Activated T-helper 1 cell treated with anti-CD3 and anti-CD28 coated beads, Interleukin-12 subunit alpha, Interleukin-12 subunit beta, Interleukin-2, Interleukin-4 antibody, amounts not matched to agents 30 ng/mL and 10 ng/mL and 1 ng/mL, durations not matched to agents 14 hours and 24 hours and 36 hours (primary cell): ENCODE measurements at regions of chr6 and their contacts with region 1.

Region 1: GRCh38 chr6:117482240-117483003 is at the start of gene DCBLD1:
- DNase-seq: peak; percentile 55
- H3K4me3 Mint-ChIP-seq: peak within 1 kb of the TSS; percentile 95
- H3K27ac Mint-ChIP-seq: peak within 1 kb of the TSS; percentile 91
- H3K4me1 Mint-ChIP-seq: peaks cover 25% of the 10 kb centered on the region
- H3K27me3 Mint-ChIP-seq: peaks cover 44% of the 10 kb centered on the region
- total RNA-seq, gene DCBLD1: 3.9 and 4.5 TPM in 2 replicates

Region 2: GRCh38 chr6:117373211-117373813 is 109.1 kb before region 1 on chr6:
- intact Hi-C with region 1: no loop called
- DNase-seq: no peak
- H3K4me3 Mint-ChIP-seq: no peak overlapping the region
- H3K27ac Mint-ChIP-seq: no peak overlapping the region
- H3K4me1 Mint-ChIP-seq: no peaks in the 10 kb centered on the region
- H3K27me3 Mint-ChIP-seq: peaks cover 2% of the 10 kb centered on the region

Region 3: GRCh38 chr6:117449549-117450439 is 32.6 kb before region 1 on chr6:
- intact Hi-C with region 1: loop called (anchors 1 kb)
- DNase-seq: peak; percentile 31
- H3K4me3 Mint-ChIP-seq: no peak overlapping the region
- H3K27ac Mint-ChIP-seq: no peak overlapping the region
- H3K4me1 Mint-ChIP-seq: no peaks in the 10 kb centered on the region
- H3K27me3 Mint-ChIP-seq: peaks cover 40% of the 10 kb centered on the region

Region 4: GRCh38 chr6:117463762-117464665 is 18.4 kb before region 1 on chr6:
- intact Hi-C with region 1: loop called (anchors 2 kb)
- DNase-seq: no peak
- H3K4me3 Mint-ChIP-seq: no peak overlapping the region
- H3K27ac Mint-ChIP-seq: no peak overlapping the region
- H3K4me1 Mint-ChIP-seq: peaks cover 21% of the 10 kb centered on the region
- H3K27me3 Mint-ChIP-seq: peaks cover 30% of the 10 kb centered on the region

Region 5: DNA sequence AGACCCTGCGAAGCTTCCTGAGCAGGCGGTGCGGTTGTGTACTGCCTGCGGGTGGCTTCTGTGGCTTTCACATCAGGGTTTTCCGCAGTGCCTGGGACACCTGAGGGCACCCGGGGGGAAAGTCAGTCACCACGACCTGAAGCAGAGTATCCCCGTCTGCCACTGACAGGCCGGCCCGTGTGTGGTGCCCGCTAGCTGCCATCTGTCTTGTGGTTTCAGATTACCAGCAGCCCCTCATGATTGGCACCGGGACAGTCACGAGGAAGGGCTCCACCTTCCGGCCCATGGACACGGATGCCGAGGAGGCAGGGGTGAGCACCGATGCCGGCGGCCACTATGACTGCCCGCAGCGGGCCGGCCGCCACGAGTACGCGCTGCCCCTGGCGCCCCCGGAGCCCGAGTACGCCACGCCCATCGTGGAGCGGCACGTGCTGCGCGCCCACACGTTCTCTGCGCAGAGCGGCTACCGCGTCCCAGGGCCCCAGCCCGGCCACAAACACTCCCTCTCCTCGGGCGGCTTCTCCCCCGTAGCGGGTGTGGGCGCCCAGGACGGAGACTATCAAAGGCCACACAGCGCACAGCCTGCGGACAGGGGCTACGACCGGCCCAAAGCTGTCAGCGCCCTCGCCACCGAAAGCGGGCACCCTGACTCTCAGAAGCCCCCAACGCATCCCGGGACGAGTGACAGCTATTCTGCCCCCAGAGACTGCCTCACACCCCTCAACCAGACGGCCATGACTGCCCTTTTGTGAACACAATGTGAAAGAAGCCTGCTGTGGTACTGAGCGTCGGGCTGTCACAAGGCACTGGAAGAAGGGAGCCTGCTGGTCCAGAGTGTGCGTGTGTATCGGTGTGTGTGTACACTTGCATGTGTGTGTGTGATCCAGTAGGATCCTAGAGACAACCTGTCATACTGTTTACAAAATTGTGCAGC is 65.5 kb after region 1 on chr6:
- intact Hi-C with region 1: loop called (anchors 1 kb)
- DNase-seq: peak; percentile 26
- H3K4me3 Mint-ChIP-seq: peak overlapping the region; percentile 77
- H3K27ac Mint-ChIP-seq: peak overlapping the region; percentile 12
- H3K4me1 Mint-ChIP-seq: peaks cover 45% of the 10 kb centered on the region
- H3K27me3 Mint-ChIP-seq: peaks cover 10% of the 10 kb centered on the region

Region 6: GRCh38 chr6:117555882-117556498 is 73.6 kb after region 1 on chr6:
- intact Hi-C with region 1: loop called (anchors 1 kb)
- DNase-seq: peak; percentile 9
- H3K4me3 Mint-ChIP-seq: no peak overlapping the region
- H3K27ac Mint-ChIP-seq: no peak overlapping the region
- H3K4me1 Mint-ChIP-seq: peaks cover 1% of the 10 kb centered on the region
- H3K27me3 Mint-ChIP-seq: peaks cover 3% of the 10 kb centered on the region

Region 7: DNA sequence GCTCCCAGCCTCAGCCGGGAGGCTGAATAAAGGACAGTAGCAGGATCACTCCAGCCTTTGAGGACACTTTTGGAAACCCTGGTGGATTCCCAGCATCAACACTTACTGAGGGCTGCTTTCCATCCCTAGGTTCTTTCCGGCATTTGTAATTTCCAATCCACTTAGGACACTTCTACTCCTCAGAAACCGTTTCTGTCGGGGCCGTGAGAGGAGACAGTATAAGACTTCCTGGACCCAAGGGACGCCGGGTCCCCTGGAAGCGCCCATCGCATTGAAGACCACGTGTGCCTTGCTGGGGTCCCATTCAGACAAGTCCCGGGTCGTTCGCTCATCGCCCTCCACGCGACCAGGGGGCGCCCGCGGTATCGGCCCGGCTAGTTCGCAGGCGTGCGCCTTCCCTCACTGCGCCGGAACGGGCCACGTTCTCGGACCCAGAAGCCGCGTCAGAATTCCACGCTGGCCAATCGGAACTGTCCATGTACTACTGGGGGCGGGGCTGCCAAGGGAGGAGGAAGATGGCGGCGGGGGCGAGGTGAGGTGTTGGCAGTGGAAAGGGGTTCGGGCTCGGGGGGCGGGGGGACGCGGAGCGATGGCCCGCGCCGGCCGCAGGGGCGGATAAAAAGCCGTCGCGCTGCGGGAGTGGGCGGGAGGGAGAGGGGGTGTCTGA is 192.7 kb after region 1 on chr6 and contains the start of gene NUS1:
- intact Hi-C with region 1: loop called (anchors 5 kb)
- DNase-seq: peak; percentile 97
- H3K4me3 Mint-ChIP-seq: peak within 1 kb of the TSS; percentile 96
- H3K27ac Mint-ChIP-seq: peak within 1 kb of the TSS; percentile 87
- H3K4me1 Mint-ChIP-seq: peaks cover 49% of the 10 kb centered on the region
- H3K27me3 Mint-ChIP-seq: no peaks in the 10 kb centered on the region
- total RNA-seq, gene NUS1: 49.5 and 52.1 TPM in 2 replicates

Region 8: GRCh38 chr6:118122801-118123200 is 640.4 kb after region 1 on chr6:
- intact Hi-C with region 1: no loop called
- DNase-seq: no peak
- H3K4me3 Mint-ChIP-seq: no peak overlapping the region
- H3K27ac Mint-ChIP-seq: no peak overlapping the region
- H3K4me1 Mint-ChIP-seq: no peaks in the 10 kb centered on the region
- H3K27me3 Mint-ChIP-seq: peaks cover 3% of the 10 kb centered on the region